PC-3 (cell line): ENCODE measurements at regions of chr4 and their contacts with region 1.

Region 1: DNA sequence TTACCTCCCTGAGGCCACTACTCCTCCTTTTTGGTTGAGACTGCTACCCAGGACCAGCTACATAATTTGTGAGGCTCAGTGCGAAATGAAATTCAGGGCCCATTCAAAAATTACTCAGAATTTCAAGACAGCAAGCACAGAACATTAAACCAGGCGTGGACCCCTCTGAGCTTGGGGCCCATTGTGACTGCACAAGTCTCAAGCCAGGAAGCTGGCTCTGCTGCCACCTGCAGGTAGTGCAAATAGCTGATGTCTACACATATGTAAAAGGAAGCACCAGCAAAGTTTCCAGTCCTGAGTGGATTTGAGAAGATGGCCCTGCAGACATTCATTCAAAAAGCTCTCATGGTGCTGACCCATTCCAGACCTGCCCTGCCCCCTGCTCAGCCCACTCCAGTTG is 213.4 kb upstream of the LNX1 start:
- DNase-seq: peak; percentile 70
- ATAC-seq: peak; percentile 43
- H3K4me3 ChIP-seq: no peak overlapping the region
- H3K27ac ChIP-seq: no peak overlapping the region
- H3K4me1 ChIP-seq: peaks cover 10% of the 10 kb centered on the region; the same call in 1 of the 2 replicates
- H3K27me3 ChIP-seq: no peaks in the 10 kb centered on the region
- CTCF ChIP-seq: peak; percentile 86

Region 2: DNA sequence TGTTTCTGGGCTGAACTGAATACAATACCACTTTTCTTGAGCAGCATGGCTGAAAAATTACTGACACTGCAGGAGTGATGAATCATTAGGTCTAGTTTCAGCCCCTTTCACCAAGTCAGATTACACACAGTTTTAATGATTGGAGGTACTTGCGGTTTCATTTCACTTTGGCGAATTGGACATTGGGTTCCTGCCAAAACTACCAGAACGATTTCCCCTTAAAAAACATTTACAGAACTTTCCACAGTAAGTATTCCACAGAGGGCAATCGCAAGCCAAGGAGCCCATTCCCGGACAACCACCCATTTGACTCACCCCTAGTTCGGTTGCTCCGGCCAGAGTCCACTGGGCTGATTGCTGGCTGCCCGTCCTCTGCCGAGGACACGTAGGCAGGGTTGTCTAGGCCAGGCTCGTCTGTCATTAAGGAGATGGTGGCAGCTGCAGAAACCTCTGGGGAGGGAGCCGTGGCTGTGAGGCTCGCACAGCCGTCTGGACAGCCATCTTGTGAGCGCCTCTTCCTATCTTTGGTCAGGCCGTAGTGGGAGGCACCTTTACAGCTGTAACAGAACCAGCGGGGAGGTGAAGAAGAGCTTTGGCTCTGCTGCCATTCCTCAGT is 296.9 kb before region 1 on chr4:
- CTCF ChIA-PET with region 1: no interaction called
- POLR2A ChIA-PET with region 1: no interaction called
- intact Hi-C with region 1: loop called (anchors 10 kb)
- DNase-seq: no peak
- ATAC-seq: no peak; the same call in 1 of the 2 replicates
- H3K4me3 ChIP-seq: no peak overlapping the region
- H3K27ac ChIP-seq: no peak overlapping the region
- H3K4me1 ChIP-seq: peaks cover 11% of the 10 kb centered on the region; the same call in 1 of the 2 replicates
- H3K27me3 ChIP-seq: no peaks in the 10 kb centered on the region
- CTCF ChIP-seq: no peak

Region 3: DNA sequence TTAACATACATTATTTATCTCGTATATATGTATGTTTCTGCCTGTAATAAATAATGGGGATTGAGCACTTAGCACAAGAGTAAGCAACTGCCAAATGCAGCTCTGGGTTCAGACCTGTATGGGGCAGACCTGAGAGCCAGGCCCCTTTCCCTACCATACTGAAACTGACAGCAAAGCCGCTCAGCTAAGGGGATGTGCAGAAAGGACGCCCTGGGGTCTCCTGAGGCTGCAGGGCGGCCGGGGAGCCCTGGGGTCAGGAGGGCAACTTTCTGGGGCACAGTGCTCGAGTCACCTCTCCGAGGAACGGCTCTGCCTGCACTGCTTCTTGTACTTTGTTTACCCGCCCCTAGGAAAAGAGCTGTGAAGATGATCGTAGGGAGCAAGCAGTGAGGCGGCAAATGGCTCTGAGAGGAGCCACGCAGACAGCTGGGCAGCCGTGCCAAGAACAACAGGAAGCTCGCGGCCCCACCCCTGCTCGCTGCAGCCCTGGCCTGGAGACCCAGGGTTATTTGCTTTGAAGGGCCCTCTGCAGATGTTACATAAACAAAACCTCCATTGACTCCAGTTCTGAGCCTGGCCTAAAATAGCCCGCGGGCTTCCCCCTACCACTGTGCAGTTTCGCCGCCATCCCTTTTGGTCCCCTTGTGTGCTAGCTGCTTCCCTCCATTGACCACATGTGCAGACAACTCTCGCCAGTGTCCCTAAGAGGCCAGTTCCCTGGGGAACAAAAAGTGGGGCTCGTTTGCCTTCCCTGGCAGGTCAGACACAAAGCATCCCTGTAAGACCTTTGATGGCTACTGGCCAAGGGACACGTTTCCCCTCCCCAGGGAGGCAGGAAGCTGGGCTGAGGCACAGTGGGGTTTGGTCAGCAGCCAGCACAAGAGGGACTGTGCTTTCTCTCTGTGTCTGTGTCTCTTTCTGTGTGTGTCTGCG is 102.1 kb before region 1 on chr4:
- CTCF ChIA-PET with region 1: interaction called, 4 read pairs
- POLR2A ChIA-PET with region 1: no interaction called
- intact Hi-C with region 1: loop called (anchors 1 kb)
- DNase-seq: peak; percentile 86
- ATAC-seq: peak; percentile 88
- H3K4me3 ChIP-seq: peak overlapping the region; percentile 63
- H3K27ac ChIP-seq: peak overlapping the region; percentile 88
- H3K4me1 ChIP-seq: peaks cover 34% of the 10 kb centered on the region
- H3K27me3 ChIP-seq: no peaks in the 10 kb centered on the region
- CTCF ChIP-seq: 0 out of 2 replicates have a peak, but pooled peaks have one; percentile 15

Region 4: DNA sequence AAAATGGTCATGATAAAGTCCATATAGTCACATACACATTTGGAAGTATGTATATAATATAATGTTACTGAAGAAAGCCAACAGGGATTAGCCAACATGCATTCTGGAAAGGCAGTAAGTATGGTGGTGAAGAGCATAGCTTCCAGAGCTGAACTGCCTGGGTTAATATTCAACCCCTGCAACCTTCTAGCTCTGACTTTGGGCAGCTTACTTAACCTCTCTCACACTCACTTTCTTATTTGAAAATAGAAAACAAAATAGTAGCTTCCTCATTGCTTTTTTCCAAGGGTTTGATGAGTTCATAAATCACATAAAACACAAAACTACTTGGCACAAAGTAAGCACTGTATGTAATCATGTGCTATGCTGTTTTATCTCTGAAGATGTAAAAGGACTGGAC is 43.2 kb after region 1 on chr4:
- CTCF ChIA-PET with region 1: no interaction called
- POLR2A ChIA-PET with region 1: no interaction called
- intact Hi-C with region 1: loop called (anchors 2 kb)
- DNase-seq: no peak
- ATAC-seq: no peak
- H3K4me3 ChIP-seq: no peak overlapping the region
- H3K27ac ChIP-seq: no peak overlapping the region
- H3K4me1 ChIP-seq: no peaks in the 10 kb centered on the region
- H3K27me3 ChIP-seq: no peaks in the 10 kb centered on the region
- CTCF ChIP-seq: no peak